IMR-90 (cell line): ENCODE measurements at regions of chr4 and their contacts with region 1.

Region 1: GRCh38 chr4:72326692-72327632 is 242.1 kb downstream of the ADAMTS3 start:
- DNase-seq: peak; percentile 42
- ATAC-seq: peak; percentile 53; the same call in 1 of the 2 replicates
- H3K4me3 ChIP-seq: no peak overlapping the region
- H3K27ac ChIP-seq: no peak overlapping the region
- H3K4me1 ChIP-seq: no peaks in the 10 kb centered on the region
- H3K27me3 ChIP-seq: 0 out of 2 replicates have a peak, but pooled peaks cover 2% of the 10 kb centered on the region
- CTCF ChIP-seq: peak; percentile 72
- POLR2A ChIP-seq: no peak
- RAD21 ChIP-seq: peak; percentile 72

Region 2: GRCh38 chr4:72468904-72469502 is 142.0 kb after region 1 on chr4:
- CTCF ChIA-PET with region 1: interaction called, 9 read pairs
- POLR2A ChIA-PET with region 1: no interaction called
- dilution Hi-C with region 1: no loop called
- in situ Hi-C with region 1: loop called (anchors 5 kb)
- intact Hi-C with region 1: loop called (anchors 1 kb)
- DNase-seq: peak; percentile 20
- ATAC-seq: no peak
- H3K4me3 ChIP-seq: no peak overlapping the region
- H3K27ac ChIP-seq: no peak overlapping the region
- H3K4me1 ChIP-seq: no peaks in the 10 kb centered on the region
- H3K27me3 ChIP-seq: no peaks in the 10 kb centered on the region
- CTCF ChIP-seq: peak; percentile 61
- POLR2A ChIP-seq: no peak
- RAD21 ChIP-seq: peak; percentile 49

Region 3: GRCh38 chr4:72924814-72925213 is 597.9 kb after region 1 on chr4:
- CTCF ChIA-PET with region 1: no interaction called
- POLR2A ChIA-PET with region 1: no interaction called
- dilution Hi-C with region 1: no loop called
- in situ Hi-C with region 1: no loop called
- intact Hi-C with region 1: no loop called
- DNase-seq: no peak
- ATAC-seq: no peak
- H3K4me3 ChIP-seq: no peak overlapping the region
- H3K27ac ChIP-seq: no peak overlapping the region
- H3K4me1 ChIP-seq: no peaks in the 10 kb centered on the region
- H3K27me3 ChIP-seq: no peaks in the 10 kb centered on the region
- CTCF ChIP-seq: no peak
- POLR2A ChIP-seq: no peak
- RAD21 ChIP-seq: no peak

Region 4: DNA sequence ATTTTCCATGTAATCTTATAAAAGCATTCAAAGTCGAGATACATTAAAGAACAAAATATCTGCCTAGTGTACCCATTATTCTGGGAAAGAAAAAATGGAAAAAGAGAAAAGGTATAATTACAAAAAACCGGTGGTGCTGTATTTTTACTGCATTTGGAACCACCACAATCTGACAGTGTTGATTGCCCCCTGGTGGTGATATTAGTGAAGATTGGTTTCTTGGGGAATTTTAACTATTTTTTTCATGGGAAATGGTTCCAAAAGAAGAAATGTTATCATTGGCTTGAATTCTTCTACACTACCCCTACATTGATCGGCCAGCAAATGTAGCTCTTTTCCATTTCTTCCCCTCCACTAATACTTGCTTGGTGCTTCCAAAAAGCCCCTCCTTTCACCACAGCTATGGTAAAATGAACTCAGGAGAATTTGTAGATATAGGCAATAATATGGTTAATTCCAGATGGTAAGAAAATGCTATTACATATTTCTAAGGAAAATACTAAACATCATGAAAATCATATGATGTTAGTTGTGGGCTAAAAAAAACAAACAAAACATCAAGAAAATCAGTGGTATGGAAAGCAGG is 692.6 kb after region 1 on chr4:
- CTCF ChIA-PET with region 1: no interaction called
- POLR2A ChIA-PET with region 1: no interaction called
- dilution Hi-C with region 1: no loop called
- in situ Hi-C with region 1: no loop called
- intact Hi-C with region 1: loop called (anchors 10 kb)
- DNase-seq: peak; percentile 47
- ATAC-seq: peak; percentile 27; the same call in 1 of the 2 replicates
- H3K4me3 ChIP-seq: no peak overlapping the region
- H3K27ac ChIP-seq: no peak overlapping the region
- H3K4me1 ChIP-seq: no peaks in the 10 kb centered on the region
- H3K27me3 ChIP-seq: no peaks in the 10 kb centered on the region; the same call in 1 of the 2 replicates
- CTCF ChIP-seq: peak; percentile 83
- POLR2A ChIP-seq: no peak
- RAD21 ChIP-seq: peak; percentile 80